Activated T-helper 2 cell treated with anti-CD3 and anti-CD28 coated beads, Interferon-gamma antibody, Interleukin-2, Interleukin-4, amounts not matched to agents 10 μg/mL and 5 μg/mL and 100 μg/mL, durations not matched to agents 14 hours and 24 hours and 36 hours (primary cell): ENCODE measurements at regions of chr10 and their contacts with region 1.

Region 1: DNA sequence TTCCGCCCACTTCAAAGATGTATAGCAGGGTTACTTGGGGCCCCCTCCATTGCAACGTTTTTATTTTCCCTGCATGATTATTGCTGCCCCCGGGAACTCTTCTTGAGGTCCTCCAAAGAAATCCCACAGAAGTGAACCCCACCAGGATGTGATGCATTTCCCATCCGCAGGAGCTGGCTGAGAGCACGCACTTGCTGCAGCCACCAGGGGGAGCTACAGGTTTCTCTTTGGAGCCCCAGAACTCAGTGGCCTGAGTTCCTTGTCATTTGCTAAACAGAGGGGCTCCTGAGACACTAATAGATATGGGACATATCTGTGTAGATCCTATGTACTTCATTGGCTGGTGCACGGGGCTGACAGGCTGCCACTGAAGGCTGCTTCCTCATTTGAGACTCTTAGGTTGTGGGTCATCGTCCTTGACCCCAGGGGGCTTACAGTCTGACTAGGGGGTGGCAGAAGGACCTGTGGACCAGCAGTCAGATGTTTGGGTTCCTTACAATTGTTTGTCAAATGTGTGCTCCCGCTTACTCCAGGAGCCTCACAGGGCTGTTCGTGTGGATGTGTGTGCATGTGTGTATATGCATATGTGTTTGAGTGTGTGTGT is 52.3 kb upstream of the ENO4 start:
- DNase-seq: peak; percentile 48
- H3K4me3 Mint-ChIP-seq: no peak overlapping the region
- H3K27ac Mint-ChIP-seq: no peak overlapping the region
- H3K4me1 Mint-ChIP-seq: peaks cover 4% of the 10 kb centered on the region
- H3K27me3 Mint-ChIP-seq: peaks cover 2% of the 10 kb centered on the region

Region 2: DNA sequence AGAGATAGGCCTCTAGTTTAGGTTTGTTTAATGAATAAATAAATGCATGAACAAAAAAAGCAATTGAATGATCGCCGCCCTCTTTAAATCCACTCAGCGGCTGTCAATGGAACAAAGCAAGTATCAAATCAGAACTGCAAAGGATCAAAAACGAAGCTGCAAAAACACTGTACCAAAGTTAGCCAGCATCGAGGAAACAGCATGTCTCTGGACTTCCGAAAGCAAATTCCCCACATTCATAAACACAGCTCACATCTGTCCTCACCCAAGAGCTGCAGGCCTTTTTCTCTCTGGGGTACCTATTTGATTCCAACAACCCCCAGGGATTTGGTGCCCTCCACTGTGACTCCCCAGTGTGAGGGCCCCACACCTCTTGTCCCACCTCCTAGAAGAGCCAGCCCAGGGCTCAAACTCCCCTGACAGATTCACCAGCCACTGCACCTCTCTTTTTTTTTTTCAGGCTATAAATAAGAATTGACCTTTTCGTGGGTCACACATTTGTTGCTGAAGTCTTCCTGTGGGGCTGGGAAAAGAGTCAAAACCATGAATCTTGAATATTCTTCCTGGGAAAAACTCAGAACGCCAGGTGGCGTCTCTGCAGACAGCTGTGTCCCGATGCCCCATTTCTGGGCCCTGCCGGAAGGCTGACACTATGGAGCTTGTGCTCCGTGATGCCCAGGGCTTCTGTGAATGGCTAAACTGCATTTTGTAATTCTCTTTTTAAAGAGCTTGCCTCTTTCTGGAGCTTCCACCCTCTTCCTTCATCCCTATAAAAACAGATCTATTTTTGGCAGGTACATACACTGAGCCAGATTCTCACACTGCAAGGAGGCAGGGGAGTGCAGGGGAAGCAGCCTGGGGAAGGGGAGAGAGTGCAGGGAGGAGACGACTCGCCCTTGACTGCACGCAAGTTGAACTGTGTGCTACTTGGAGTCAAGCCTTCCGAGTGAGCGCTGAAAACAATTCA is 106.4 kb before region 1 on chr10:
- intact Hi-C with region 1: no loop called
- DNase-seq: no peak
- H3K4me3 Mint-ChIP-seq: no peak overlapping the region
- H3K27ac Mint-ChIP-seq: no peak overlapping the region
- H3K4me1 Mint-ChIP-seq: no peaks in the 10 kb centered on the region
- H3K27me3 Mint-ChIP-seq: peaks cover 5% of the 10 kb centered on the region

Region 3: DNA sequence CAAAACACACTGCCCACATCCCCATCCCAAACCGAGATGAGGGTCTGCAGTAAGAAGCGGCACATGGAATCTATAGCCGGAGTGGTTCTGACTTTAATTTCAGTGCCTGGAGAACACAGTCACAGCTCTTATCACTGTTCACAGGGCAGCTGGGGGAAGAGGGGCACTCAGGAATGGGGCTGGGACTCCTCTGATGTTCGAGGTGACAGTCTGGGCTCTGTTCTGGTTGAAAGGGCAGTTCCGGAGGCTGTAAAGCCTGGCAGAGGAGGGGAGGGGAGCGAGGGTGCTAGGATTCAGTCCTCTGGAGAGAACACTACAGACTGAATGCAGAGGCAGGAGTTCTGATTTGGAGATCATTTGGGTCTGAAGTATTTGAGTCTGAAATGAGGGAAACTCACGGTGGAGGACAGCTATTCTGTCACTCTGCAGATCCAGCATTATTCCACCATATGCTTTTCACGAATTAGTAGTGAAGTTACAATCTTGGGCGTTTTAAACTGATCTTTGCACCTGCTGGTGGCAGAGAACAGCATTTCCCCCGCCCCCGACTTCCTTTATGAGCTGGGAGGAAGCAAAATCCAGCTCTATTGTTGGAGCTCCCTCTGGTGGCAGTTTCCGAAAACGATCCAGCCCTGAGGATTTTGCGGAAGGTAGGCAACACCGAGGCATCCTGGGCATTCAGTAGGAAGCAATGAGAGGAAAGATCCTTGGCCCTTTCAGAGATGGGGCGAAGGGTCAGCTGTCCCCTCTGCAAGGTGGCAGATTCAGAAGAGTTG is 377.6 kb after region 1 on chr10:
- intact Hi-C with region 1: loop called (anchors 1 kb)
- DNase-seq: peak; percentile 73
- H3K4me3 Mint-ChIP-seq: peak overlapping the region; percentile 77
- H3K27ac Mint-ChIP-seq: peak overlapping the region; percentile 42
- H3K4me1 Mint-ChIP-seq: peaks cover 13% of the 10 kb centered on the region
- H3K27me3 Mint-ChIP-seq: peaks cover 41% of the 10 kb centered on the region